GM10248 (cell line): ENCODE measurements at regions of chr19 and their contacts with region 1.

Region 1: GRCh38 chr19:42529248-42529764 is 1.0 kb upstream of the CEACAM1 start:
- DNase-seq: peak; percentile 84
- CTCF ChIP-seq: peak; percentile 97

Region 2: GRCh38 chr19:42433503-42434260 is 95.6 kb before region 1 on chr19:
- CTCF ChIA-PET with region 1: interaction called, 58 read pairs
- POLR2A ChIA-PET with region 1: no interaction called
- DNase-seq: peak; percentile 66
- CTCF ChIP-seq: peak; percentile 85

Region 3: DNA sequence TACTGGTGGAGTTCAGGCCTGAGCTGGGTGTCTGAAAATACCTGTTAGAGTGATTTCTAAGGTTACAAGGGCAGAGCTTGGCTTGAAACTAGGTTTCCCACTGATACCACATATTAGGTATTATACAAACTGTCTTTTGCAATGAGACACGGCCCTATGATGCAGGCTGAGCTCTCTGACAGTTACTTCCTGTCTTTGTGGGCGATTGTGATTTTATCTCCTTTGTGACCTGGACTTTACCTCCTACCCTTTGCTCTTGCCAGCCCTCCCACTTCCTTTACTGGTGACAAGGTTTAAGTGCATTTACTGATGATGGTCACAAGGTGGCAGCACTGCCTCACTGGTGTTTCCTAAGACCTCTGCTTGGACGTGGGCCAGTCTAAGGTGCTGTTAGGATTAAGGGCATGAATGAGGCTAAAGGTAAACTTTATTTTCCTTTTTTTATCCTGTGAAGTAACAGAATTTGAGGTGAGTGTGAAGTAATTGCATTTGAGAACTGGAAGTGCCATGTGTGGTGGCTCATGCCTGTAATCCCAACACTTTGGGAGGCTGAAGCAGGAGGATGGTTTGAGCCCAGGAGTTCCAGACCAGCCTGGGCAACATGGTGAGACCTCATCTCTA is 78.9 kb before region 1 on chr19:
- CTCF ChIA-PET with region 1: interaction called, 194 read pairs
- POLR2A ChIA-PET with region 1: no interaction called
- DNase-seq: peak; percentile 86
- CTCF ChIP-seq: peak; percentile 84

Region 4: GRCh38 chr19:42461700-42462324 is 67.5 kb before region 1 on chr19:
- CTCF ChIA-PET with region 1: interaction called, 97 read pairs
- POLR2A ChIA-PET with region 1: no interaction called
- DNase-seq: no peak
- CTCF ChIP-seq: no peak

Region 5: DNA sequence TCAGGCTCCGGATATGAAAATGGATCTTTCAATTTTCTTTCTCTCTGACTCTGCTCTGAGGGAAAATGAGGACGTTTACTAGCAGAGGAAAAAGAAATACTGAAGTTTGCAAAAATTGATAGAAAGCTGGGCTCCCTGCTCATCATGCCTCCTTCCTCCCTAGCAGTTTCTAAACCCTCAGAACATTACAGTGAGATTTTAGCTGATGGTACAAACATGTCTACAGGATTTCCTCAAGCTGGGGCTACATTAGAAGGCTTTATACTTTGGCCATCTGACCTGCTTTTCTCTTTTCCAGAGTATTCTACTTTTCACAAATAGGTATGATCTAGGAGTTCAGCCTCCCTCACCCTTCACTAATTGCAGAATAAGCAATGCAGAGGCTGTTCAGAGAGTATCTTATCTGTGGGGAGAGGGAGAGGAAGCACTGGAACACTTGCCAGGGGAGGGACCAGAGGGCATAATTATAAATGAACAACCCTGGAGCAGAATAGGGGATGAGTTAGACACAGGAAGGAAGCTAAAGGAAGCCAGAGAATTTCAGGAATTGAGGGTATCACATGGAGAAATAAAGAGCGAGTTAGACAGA is 31.0 kb before region 1 on chr19:
- CTCF ChIA-PET with region 1: interaction called, 17 read pairs
- POLR2A ChIA-PET with region 1: no interaction called
- DNase-seq: no peak
- CTCF ChIP-seq: no peak

Region 6: DNA sequence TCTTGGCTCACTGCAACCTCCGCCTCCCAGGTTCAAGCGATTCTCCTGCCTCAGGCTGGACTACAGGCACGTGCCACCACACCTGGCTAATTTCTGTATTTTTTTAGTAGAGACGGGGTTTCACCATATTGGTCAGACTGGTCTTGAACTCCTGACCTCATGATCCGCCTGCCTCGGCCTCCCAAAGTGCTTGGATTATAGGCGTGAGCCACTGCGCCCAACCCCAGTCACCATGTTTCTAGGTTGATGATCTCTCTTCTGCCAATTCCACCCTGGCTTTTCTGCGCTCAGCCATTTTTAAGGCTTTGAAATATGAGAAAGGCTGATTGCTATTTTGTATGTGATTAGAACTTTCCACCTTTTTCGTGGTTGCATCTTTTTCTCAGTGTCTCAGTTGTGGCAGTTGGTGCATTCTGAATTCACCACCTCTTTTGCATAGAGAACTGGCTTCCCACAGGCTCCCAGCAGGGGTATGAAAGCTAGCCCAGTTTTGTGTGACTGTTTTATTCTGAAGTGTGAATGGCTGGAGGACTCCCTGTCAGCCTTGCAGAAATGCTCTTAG is 16.5 kb before region 1 on chr19:
- CTCF ChIA-PET with region 1: interaction called, 60 read pairs
- POLR2A ChIA-PET with region 1: no interaction called
- DNase-seq: peak; percentile 70
- CTCF ChIP-seq: no peak

Region 7: DNA sequence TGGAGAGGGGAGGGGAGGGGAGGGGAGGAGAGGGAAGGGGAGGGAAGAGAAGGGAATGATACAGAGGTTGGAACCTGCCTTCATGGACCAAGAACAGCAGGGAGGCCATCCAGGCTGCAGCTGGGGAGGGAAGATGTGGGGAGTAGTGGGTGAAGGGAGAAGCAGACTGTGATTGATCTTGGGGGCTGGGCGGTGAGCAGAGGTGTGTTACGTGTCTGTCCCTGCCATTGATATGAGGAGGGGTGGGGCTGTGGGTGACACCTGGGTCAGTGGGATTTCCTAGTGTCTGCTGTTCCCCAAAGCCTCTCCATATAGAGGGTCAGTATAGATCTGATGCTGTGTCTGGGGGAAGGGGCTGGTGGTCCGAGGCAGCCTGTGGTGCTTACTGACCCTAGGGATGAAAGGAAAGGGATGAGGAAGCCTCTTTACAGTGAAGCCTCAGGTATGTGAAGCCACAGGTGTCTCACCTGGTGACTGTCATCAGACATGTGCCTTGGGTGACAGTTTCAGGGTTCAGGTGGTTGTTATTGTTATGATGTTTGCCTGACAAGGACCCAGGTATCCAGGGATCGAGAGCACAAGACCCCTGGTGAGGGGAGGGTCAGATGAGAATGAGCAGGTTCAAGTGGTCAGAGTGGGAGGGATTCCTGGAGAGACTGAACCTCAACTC is 17.7 kb after region 1 on chr19:
- CTCF ChIA-PET with region 1: interaction called, 14 read pairs
- POLR2A ChIA-PET with region 1: no interaction called
- DNase-seq: no peak
- CTCF ChIP-seq: no peak